ENCODE measurements at regions of chr10 and their contacts with region 1.

Region 1: DNA sequence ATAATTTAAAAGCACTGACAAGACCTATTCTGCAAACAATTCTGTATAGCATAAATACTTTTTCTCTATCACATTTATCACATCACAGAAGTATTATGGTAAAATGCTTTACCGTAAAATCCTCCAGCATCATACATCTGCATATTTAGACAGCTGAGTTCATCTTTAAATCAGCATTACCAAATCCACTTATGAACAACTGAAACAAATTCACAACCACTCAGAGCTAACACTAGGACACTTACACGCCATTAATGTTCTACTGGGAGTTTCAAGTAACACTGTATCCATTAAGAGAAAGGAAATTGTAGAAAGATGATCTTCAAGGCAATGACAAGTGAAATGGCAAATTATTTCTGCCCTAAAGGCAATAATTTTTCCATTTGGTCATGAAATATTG is 105.7 kb upstream of the DKK1 start:
- DNase-seq: no peak
- ATAC-seq: no peak
- H3K4me3 ChIP-seq: no peak overlapping the region
- H3K4me3 Mint-ChIP-seq: no peak overlapping the region
- H3K27ac ChIP-seq: no peak overlapping the region
- H3K27ac Mint-ChIP-seq: no peak overlapping the region
- H3K4me1 ChIP-seq: no peaks in the 10 kb centered on the region
- H3K4me1 Mint-ChIP-seq: no peaks in the 10 kb centered on the region
- H3K27me3 ChIP-seq: no peaks in the 10 kb centered on the region
- H3K27me3 Mint-ChIP-seq: no peaks in the 10 kb centered on the region
- CTCF ChIP-seq: no peak

Region 2: DNA sequence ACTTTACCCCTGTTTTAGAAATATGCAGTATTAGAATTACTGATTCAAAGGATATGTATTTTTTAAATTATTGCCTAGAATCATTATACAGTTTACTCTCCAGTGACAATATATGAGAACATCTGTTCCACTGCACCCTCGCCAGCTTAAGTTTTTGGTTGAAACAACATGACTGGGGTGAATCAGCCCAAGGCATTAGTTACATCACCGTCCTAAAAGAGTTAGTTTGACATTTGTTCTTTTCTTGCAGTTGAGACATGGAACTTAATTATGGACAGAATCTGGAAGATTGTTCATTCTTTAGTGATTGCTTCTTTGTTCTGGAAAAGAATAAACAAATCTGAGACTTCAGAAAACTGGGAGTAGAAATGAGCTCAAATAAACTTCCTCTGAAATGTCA is 61.6 kb before region 1 on chr10:
- intact Hi-C with region 1: loop called (anchors 10 kb)
- DNase-seq: no peak
- ATAC-seq: no peak
- H3K4me3 ChIP-seq: no peak overlapping the region
- H3K4me3 Mint-ChIP-seq: no peak overlapping the region
- H3K27ac ChIP-seq: no peak overlapping the region
- H3K27ac Mint-ChIP-seq: no peak overlapping the region
- H3K4me1 ChIP-seq: no peaks in the 10 kb centered on the region
- H3K4me1 Mint-ChIP-seq: no peaks in the 10 kb centered on the region
- H3K27me3 ChIP-seq: no peaks in the 10 kb centered on the region
- H3K27me3 Mint-ChIP-seq: no peaks in the 10 kb centered on the region
- CTCF ChIP-seq: no peak

Region 3: GRCh38 chr10:52283174-52283573 is 74.8 kb after region 1 on chr10:
- intact Hi-C with region 1: no loop called
- DNase-seq: no peak
- ATAC-seq: no peak
- H3K4me3 ChIP-seq: no peak overlapping the region
- H3K4me3 Mint-ChIP-seq: no peak overlapping the region
- H3K27ac ChIP-seq: no peak overlapping the region
- H3K27ac Mint-ChIP-seq: no peak overlapping the region
- H3K4me1 ChIP-seq: no peaks in the 10 kb centered on the region
- H3K4me1 Mint-ChIP-seq: no peaks in the 10 kb centered on the region
- H3K27me3 ChIP-seq: no peaks in the 10 kb centered on the region
- H3K27me3 Mint-ChIP-seq: no peaks in the 10 kb centered on the region
- CTCF ChIP-seq: no peak